ENCODE measurements at regions of chr9 and their contacts with region 1.

Region 1: DNA sequence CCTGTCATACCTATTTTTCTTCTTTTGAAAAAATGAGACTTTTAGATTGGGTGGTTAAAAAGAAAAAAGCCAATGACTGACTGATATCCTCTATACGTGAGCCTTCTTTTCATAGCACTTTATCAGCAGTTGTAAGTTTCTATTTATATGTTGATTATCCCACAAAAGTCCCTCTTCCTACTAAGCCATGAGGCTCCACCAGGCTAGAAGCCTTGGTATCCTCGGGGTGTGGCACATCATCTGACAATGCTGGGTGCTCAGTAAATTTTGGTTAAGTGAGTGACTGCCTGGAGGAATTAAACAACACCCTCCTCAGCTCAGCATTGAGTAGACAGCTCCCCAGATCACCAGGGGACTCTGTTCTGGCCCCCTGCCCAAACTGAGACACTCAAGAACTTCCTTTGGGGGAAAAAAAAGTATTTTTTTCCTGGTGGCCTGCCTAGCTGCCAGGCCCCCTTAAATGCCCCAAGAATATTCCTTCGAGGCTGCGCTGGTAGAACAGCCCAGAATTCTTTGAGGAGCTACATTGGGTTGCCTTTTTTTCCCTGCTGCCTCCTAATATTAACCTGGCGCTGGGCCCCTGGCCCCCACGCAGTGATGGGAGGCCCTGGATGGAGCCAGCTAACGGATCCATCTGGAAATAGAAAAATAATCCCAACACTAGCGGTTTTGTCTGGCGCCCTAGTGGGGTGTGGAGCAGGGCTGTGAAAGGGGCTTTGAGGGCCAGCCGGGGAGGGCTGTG is 23.4 kb upstream of the COL27A1 start:
- DNase-seq: no peak
- H3K4me3 ChIP-seq: no peak overlapping the region
- H3K27me3 ChIP-seq: peaks cover 34% of the 10 kb centered on the region
- CTCF ChIP-seq: no peak

Region 2: GRCh38 chr9:113454914-113455761 is 676.8 kb before region 1 on chr9:
- CTCF ChIA-PET with region 1: no interaction called
- POLR2A ChIA-PET with region 1: no interaction called
- DNase-seq: peak; percentile 59
- H3K4me3 ChIP-seq: no peak overlapping the region
- H3K27me3 ChIP-seq: no peaks in the 10 kb centered on the region
- CTCF ChIP-seq: no peak

Region 3: DNA sequence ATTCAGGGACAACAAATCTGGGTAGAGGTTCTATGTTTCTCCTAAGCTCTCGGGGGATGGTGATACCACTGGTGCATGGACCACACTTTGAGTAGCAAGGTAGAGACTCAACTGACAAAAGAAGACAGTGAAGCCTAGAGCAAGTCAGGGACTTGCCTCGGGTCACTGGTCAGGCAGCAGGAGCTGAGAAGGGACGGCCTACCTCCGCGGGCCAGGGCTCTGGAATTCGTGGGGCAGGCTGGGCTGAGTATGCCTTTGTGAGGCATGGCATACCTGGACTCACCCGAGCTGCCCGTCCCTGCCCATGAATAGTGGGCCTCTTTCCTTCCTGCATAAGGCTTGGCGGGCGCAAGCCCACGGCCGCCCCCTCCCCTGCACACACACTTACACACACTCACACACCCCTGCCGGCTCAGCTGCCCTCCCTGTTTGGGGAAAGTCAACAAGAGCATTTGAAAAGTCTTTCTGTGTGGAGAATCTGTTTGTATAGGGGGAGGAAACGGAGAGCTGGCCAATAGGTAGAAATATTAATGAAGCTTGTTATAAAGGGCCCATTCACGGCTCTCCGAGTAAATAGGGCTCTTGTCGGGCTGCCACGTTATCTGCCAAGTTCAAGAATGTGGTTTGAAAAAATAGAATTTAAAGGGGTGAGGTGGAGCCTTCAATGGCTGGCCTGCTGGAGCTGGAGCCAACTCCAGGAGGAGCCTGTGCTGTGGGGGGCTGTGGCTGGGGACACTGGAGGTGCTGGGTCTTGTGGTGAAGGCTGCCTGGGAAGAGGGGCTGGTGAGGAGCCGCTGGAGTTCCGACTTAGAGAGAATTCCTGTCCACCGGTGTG is 13.8 kb before region 1 on chr9:
- CTCF ChIA-PET with region 1: interaction called, 11 read pairs
- POLR2A ChIA-PET with region 1: no interaction called
- DNase-seq: no peak
- H3K4me3 ChIP-seq: no peak overlapping the region
- H3K27me3 ChIP-seq: peaks cover 23% of the 10 kb centered on the region
- CTCF ChIP-seq: no peak